CD14-positive monocyte (primary cell): ENCODE measurements at regions of chr2 and their contacts with region 1.

Region 1: DNA sequence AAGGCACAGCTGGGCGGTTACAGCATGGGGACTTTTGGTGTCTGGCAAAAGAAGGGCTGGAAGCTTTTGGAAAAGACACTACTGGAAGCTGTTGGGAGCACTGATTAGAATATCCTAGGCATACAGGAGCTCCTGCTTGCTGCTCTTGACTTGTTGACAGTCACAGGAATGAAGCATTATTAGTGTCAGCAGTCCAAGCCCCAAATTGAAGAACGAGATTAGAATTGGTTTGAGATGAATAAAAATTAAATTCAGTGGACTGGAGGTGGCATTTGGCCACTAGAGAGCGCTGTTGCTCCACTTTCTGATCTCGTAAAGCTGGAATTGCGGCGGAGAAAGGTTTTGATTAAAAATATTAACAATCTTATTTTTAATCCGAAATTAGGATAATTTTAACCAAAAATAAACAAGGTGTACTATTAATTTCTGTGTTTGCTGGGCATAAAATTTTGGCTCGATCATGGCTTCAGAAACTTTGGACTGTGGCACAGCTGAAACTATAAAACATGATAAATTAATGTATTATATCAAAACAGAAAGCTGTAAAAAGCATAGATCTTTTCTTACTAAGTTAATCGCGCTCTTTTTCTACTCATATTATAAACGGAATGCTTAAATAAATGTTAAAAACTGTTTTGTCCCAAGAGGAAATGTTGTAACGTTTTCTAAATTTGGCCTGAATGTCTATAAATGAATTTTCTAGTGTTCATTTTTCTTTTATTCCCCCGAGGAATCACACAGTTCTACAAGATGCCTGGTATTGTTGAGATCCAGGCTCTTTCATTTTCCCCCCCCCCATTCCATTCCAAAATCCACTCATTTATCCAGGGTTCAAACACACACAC is 2.4 kb upstream of the HOXD8 start:
- DNase-seq: peak; percentile 38 to 58 (median 55)
- H3K4me3 ChIP-seq: no peak overlapping the region
- H3K4me3 Mint-ChIP-seq: peak overlapping the region in 1 of 2 donors; percentile 61
- H3K27ac ChIP-seq: no peak overlapping the region
- H3K27ac Mint-ChIP-seq: no peak overlapping the region
- H3K4me1 ChIP-seq: peaks cover 11 to 33% of the 10 kb centered on the region in 2 donors
- H3K4me1 Mint-ChIP-seq: peaks cover 33% of the 10 kb centered on the region
- H3K27me3 ChIP-seq: peaks cover 82 to 91% of the 10 kb centered on the region in 2 donors
- H3K27me3 Mint-ChIP-seq: peaks cover 91 to 98% (median 91%) of the 10 kb centered on the region in 3 donors
- CTCF ChIP-seq: peak; percentile 90

Region 2: DNA sequence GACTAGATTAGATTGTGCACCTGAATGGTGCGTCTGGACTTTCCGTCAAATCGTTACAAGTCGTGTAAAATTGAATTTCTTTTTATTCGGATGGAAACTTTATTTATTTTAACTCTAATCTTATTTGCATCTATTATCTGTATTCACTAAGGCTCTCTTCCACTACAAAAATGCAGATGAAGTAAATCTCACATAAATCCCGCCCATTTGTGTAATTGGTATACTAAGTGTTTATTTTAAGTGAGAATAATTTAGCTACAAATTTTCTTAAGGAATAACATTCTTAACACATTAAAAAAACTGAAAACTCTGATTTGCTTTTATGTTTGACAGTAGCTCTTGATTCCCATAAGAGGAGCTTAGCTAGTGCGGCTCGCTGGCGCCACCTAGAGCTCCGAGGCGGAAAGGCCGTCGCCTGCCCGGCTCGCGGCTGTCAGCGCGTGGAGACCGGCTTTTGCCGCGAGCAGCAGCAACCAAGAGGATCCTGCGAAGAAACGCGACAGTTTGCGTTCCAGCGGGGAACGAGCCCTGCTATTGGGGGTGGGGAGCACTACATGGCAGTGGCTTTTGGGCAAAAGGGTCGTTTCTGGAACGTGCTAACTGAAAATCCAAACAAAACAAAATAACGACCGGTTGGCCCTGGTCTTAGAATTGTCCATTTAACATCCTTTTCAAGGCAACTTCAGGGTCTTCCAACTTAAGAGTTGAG is 1785.7 kb before region 1 on chr2:
- intact Hi-C with region 1: loop called in 1 of 2 experiments (anchors 5 kb)
- DNase-seq: peak; percentile 81 to 88 (median 83)
- H3K4me3 ChIP-seq: peak overlapping the region in 1 of 3 experiments; percentile 52
- H3K4me3 Mint-ChIP-seq: peak overlapping the region; percentile 62 to 87
- H3K27ac ChIP-seq: no peak overlapping the region
- H3K27ac Mint-ChIP-seq: peak overlapping the region in 1 of 7 donors; percentile 58
- H3K4me1 ChIP-seq: peaks cover 47 to 57% of the 10 kb centered on the region in 2 donors
- H3K4me1 Mint-ChIP-seq: peaks cover 56% of the 10 kb centered on the region
- H3K27me3 ChIP-seq: peaks cover 89 to 97% of the 10 kb centered on the region in 2 donors
- H3K27me3 Mint-ChIP-seq: peaks cover 83 to 94% (median 90%) of the 10 kb centered on the region in 3 donors
- CTCF ChIP-seq: peak; percentile 99

Region 3: GRCh38 chr2:176079831-176080539 is 47.2 kb before region 1 on chr2:
- intact Hi-C with region 1: loop called in 1 of 2 experiments (anchors 5 kb)
- DNase-seq: peak in 1 of 3 donors; percentile 44
- H3K4me3 ChIP-seq: no peak overlapping the region
- H3K4me3 Mint-ChIP-seq: peak overlapping the region in 1 of 2 donors; percentile 92
- H3K27ac ChIP-seq: no peak overlapping the region
- H3K27ac Mint-ChIP-seq: no peak overlapping the region
- H3K4me1 ChIP-seq: peaks cover 0 to 20% of the 10 kb centered on the region in 2 donors
- H3K4me1 Mint-ChIP-seq: peaks cover 26% of the 10 kb centered on the region
- H3K27me3 ChIP-seq: peaks cover 91 to 96% of the 10 kb centered on the region in 2 donors
- H3K27me3 Mint-ChIP-seq: peaks cover 85 to 95% (median 91%) of the 10 kb centered on the region in 3 donors
- CTCF ChIP-seq: peak; percentile 74

Region 4: GRCh38 chr2:176454893-176455811 is 328.0 kb after region 1 on chr2:
- intact Hi-C with region 1: loop called in 1 of 2 experiments (anchors 2 kb)
- DNase-seq: peak; percentile 17 to 55 (median 45)
- H3K4me3 ChIP-seq: no peak overlapping the region
- H3K4me3 Mint-ChIP-seq: no peak overlapping the region
- H3K27ac ChIP-seq: no peak overlapping the region
- H3K27ac Mint-ChIP-seq: no peak overlapping the region
- H3K4me1 ChIP-seq: no peaks in the 10 kb centered on the region
- H3K4me1 Mint-ChIP-seq: no peaks in the 10 kb centered on the region
- H3K27me3 ChIP-seq: peaks cover 12 to 29% of the 10 kb centered on the region in 2 donors
- H3K27me3 Mint-ChIP-seq: peaks cover 17 to 33% (median 20%) of the 10 kb centered on the region in 3 donors
- CTCF ChIP-seq: peak; percentile 92

Region 5: DNA sequence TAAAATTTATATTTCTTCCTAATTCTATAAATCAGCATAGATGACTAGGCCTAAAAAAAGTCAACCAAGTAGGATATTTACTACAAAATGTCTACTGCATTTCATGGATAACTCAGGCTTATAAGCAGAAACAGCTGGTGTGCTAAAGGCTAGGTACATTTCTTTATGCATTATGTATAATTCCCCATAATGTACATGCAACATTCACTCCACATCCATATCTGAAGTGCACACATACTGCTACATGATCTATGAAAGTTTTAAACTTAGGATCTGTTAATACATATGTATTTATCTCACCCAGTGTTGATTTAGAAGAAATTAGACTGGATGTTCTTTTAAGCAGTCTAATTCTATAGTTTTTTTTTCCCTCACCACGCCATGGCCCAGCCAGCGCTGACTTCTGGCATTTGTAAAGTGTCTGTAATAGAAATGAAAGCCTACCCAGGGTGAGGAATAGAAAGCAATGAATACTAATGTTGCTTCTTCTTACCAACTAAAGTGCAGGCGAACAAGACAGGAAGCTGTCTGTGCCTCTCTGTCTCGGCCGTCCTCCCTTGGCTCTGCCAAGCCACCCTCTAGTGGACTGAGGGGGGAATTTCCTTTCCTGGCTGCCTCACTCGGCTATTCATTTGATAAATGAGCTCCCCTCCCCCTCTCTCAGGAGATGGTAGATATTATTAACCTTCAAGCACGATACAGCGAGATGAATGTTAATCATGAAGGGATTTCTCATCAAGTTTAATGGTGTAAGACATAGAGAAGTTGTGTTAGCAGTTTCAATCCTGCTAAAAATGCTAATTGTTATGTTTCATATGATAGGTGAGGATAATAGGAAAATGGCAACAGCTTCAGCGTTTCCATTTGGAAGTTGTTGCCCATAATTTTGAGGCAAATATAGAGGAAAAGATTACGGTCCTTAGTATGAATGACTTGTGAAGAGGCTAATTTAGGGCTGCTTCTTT is 526.6 kb after region 1 on chr2:
- intact Hi-C with region 1: loop called (anchors 2 to 5 kb)
- DNase-seq: peak in 1 of 3 donors; percentile 11
- H3K4me3 ChIP-seq: no peak overlapping the region
- H3K4me3 Mint-ChIP-seq: no peak overlapping the region
- H3K27ac ChIP-seq: no peak overlapping the region
- H3K27ac Mint-ChIP-seq: no peak overlapping the region
- H3K4me1 ChIP-seq: no peaks in the 10 kb centered on the region
- H3K4me1 Mint-ChIP-seq: no peaks in the 10 kb centered on the region
- H3K27me3 ChIP-seq: peaks cover 16 to 37% of the 10 kb centered on the region in 2 donors
- H3K27me3 Mint-ChIP-seq: peaks cover 10 to 51% (median 19%) of the 10 kb centered on the region in 3 donors
- CTCF ChIP-seq: peak; percentile 49

Region 6: DNA sequence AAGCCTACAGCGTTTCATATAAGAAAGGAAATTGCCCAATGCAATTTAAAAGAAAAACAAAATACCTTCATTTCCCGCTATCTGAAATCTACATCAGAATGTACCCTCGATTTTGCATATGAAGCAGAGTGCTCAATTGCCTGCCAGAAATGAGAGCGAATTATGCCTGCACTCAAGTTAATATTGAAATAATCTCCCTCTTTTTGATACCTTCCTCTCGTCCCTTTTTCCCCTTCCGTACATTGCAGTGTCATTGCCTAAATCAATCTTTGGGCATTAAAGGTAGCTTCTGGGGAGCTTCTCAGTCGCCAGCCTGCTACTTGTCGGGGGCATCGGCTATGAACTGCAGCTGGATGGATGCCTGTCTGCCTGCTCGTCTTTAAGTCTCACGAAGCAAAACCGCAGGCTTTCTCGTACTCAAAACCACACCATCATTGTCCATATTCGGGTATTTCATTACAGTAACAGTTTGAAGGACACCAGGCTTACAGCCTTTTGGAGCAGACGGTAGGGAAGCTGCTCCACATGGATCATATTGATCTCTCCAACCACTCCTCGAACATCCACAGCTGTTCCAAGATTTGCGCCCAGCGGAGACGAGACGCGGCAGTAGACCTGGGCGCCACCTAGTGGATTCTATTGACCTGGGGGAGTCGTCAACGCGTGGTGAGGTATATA is 1021.5 kb after region 1 on chr2:
- intact Hi-C with region 1: loop called (anchors 5 kb)
- DNase-seq: peak; percentile 49 to 63 (median 61)
- H3K4me3 ChIP-seq: peak overlapping the region; percentile 32 to 80 (median 69)
- H3K4me3 Mint-ChIP-seq: peak overlapping the region; percentile 83 to 99
- H3K27ac ChIP-seq: no peak overlapping the region
- H3K27ac Mint-ChIP-seq: no peak overlapping the region
- H3K4me1 ChIP-seq: peaks cover 11 to 13% of the 10 kb centered on the region in 2 donors
- H3K4me1 Mint-ChIP-seq: peaks cover 16% of the 10 kb centered on the region
- H3K27me3 ChIP-seq: peaks cover 27% of the 10 kb centered on the region in 2 donors
- H3K27me3 Mint-ChIP-seq: peaks cover 20 to 34% (median 27%) of the 10 kb centered on the region in 3 donors
- CTCF ChIP-seq: peak; percentile 95